H1 (cell line): ENCODE measurements at regions of chr20 and their contacts with region 1.

Region 1: GRCh38 chr20:62368976-62369814 is 2.1 kb upstream of the LAMA5 start:
- DNase-seq: peak in 1 of 2 experiments; percentile 74
- H3K4me3 ChIP-seq: peak overlapping the region; percentile 3 to 77 (median 43); a peak in 5 of 8 replicates
- H3K27ac ChIP-seq: no peak overlapping the region
- H3K4me1 ChIP-seq: peaks cover 10 to 51% (median 43%) of the 10 kb centered on the region in 4 experiments
- H3K27me3 ChIP-seq: no peaks in the 10 kb centered on the region
- CTCF ChIP-seq: peak; percentile 48 to 52 (median 48)
- EP300 ChIP-seq: no peak
- POLR2A ChIP-seq: peak in 1 of 2 experiments; percentile 30; a peak in 1 of 3 replicates
- RAD21 ChIP-seq: peak in 1 of 2 experiments; percentile 18; a peak in 1 of 4 replicates

Region 2: DNA sequence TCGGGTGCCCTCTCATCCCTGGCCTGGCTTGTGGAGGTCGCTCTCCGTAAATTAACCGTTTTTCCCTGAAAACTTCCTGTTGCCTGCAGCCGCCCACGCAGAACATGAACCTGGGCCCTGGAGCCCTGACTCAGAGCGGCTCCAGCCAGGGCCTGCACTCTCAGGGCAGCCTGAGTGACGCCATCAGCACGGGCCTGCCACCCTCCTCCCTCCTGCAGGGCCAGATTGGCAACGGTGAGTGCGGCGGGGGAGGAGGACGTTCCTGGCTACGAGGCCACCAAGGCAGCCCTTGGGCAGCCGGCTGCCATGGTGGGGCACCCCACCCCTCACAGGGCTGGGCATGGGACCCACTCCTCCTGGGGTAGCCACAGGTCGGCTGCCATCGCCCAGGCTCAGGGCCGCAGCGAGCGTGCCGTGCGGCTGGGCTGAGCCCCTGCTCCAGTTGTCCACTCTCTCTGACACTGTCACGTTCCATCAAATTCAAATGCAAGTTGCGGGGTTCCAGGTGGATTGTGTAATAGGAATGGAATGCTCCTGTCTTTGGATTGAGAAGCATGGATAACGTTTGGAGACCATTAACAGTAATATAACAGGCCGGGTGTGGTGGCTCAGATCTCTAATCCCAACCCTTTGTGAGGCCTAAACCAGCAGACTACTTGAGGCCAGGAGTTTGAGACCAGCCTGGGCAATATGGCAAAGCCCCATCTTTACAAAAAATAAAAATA is 207.7 kb before region 1 on chr20:
- CTCF ChIA-PET with region 1: no interaction called
- POLR2A ChIA-PET with region 1: no interaction called
- DNase-seq: no peak
- H3K4me3 ChIP-seq: no peak overlapping the region
- H3K27ac ChIP-seq: no peak overlapping the region
- H3K4me1 ChIP-seq: peaks cover 0 to 3% (median 2%) of the 10 kb centered on the region in 4 experiments; a peak in 5 of 7 replicates
- H3K27me3 ChIP-seq: no peaks in the 10 kb centered on the region
- CTCF ChIP-seq: no peak
- EP300 ChIP-seq: no peak
- POLR2A ChIP-seq: no peak
- RAD21 ChIP-seq: no peak

Region 3: DNA sequence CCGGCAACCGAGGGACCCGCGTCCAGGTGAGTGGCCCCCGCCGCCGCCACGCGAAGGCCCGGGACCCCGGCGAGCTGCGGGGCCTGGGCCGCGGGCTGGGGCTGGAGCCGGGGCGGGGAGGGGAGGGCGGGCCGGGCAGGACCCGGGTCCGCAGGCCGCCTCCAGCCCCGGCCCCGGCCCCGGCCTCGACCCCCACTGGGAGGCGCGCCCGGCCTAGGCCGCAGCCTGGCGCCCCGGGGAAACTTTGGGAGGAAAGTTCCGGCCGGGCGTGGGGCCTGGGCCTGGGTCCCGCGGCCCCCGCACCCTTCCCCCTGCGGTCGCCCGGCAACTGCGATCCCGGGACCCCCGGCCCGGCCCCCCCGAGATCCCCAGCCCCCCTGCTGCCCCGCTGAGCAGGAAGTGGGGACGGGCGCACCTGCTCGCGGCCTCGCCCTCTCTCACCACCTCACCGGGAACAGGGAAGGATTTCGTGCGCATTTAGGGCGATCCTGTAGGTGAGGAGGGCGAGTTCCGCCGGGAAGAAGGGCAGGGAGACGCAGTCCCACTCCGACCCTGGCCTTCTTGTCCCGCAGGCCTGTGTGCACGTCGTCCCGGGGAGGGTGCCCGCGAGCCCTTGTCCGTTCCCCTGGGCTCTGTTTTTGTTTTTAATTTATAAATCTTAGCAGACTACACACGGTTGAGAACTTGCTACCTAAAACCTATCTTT is 130.5 kb before region 1 on chr20:
- CTCF ChIA-PET with region 1: no interaction called
- POLR2A ChIA-PET with region 1: no interaction called
- DNase-seq: no peak
- H3K4me3 ChIP-seq: peak overlapping the region; percentile 72 to 90 (median 74)
- H3K27ac ChIP-seq: no peak overlapping the region
- H3K4me1 ChIP-seq: peaks cover 0 to 9% (median 6%) of the 10 kb centered on the region in 4 experiments; a peak in 5 of 7 replicates
- H3K27me3 ChIP-seq: 0 out of 7 replicates have a peak, but pooled peaks cover 0 to 3% (median 0%) of the 10 kb centered on the region in 4 experiments
- CTCF ChIP-seq: no peak
- EP300 ChIP-seq: no peak
- POLR2A ChIP-seq: no peak
- RAD21 ChIP-seq: no peak

Region 4: GRCh38 chr20:62302341-62303058 is 66.7 kb before region 1 on chr20 and contains the start of gene ADRM1:
- CTCF ChIA-PET with region 1: interaction called, 7 read pairs
- POLR2A ChIA-PET with region 1: interaction called, 170 read pairs
- DNase-seq: peak; percentile 89 to 98
- H3K4me3 ChIP-seq: peak within 1 kb of the TSS; percentile 62 to 96 (median 90)
- H3K27ac ChIP-seq: peak within 1 kb of the TSS; percentile 73; the same call in 1 of the 2 replicates
- H3K4me1 ChIP-seq: peaks cover 0 to 9% (median 4%) of the 10 kb centered on the region in 4 experiments; a peak in 5 of 7 replicates
- H3K27me3 ChIP-seq: no peaks in the 10 kb centered on the region
- CTCF ChIP-seq: peak; percentile 64 to 98 (median 75)
- EP300 ChIP-seq: peak; percentile 44 to 90; a peak in 2 of 3 replicates
- POLR2A ChIP-seq: peak in 1 of 2 experiments; percentile 76; a peak in 2 of 3 replicates
- RAD21 ChIP-seq: peak; percentile 47 to 56
- total RNA-seq, gene ADRM1: 126 and 138 TPM in 2 replicates

Region 5: GRCh38 chr20:62327726-62328495 is 41.3 kb before region 1 on chr20:
- CTCF ChIA-PET with region 1: interaction called, 9 read pairs
- POLR2A ChIA-PET with region 1: interaction called, 18 read pairs
- DNase-seq: no peak
- H3K4me3 ChIP-seq: no peak overlapping the region
- H3K27ac ChIP-seq: no peak overlapping the region
- H3K4me1 ChIP-seq: no peaks in the 10 kb centered on the region
- H3K27me3 ChIP-seq: no peaks in the 10 kb centered on the region
- CTCF ChIP-seq: peak in 1 of 3 experiments; percentile 13; a peak in 1 of 4 replicates
- EP300 ChIP-seq: no peak
- POLR2A ChIP-seq: no peak
- RAD21 ChIP-seq: peak in 1 of 2 experiments; percentile 20; a peak in 1 of 4 replicates

Region 6: GRCh38 chr20:62333820-62334595 is 35.2 kb before region 1 on chr20:
- CTCF ChIA-PET with region 1: interaction called, 13 read pairs
- POLR2A ChIA-PET with region 1: interaction called, 18 read pairs
- DNase-seq: no peak
- H3K4me3 ChIP-seq: no peak overlapping the region
- H3K27ac ChIP-seq: no peak overlapping the region
- H3K4me1 ChIP-seq: no peaks in the 10 kb centered on the region
- H3K27me3 ChIP-seq: no peaks in the 10 kb centered on the region
- CTCF ChIP-seq: no peak
- EP300 ChIP-seq: no peak
- POLR2A ChIP-seq: no peak
- RAD21 ChIP-seq: no peak

Region 7: DNA sequence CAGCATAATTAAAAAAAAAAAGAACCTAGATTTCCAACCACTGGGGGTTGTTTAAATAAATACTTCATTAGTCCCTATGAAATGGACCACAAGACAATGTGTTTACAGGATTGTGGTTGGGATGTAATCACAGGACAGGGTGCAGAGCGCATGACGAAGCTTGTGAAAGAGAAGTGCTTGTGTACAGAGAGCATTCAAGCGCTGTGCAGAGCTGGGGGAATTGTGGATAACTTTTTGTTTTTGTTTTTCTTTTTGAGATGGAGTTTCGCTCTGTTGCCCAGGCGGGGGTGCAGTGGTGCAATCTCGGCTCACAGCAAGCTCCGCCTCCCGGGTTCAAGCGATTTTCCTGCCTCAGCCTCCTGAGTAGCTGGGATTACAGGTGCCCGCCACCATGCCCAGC is 24.4 kb before region 1 on chr20:
- CTCF ChIA-PET with region 1: interaction called, 13 read pairs
- POLR2A ChIA-PET with region 1: interaction called, 114 read pairs
- DNase-seq: no peak
- H3K4me3 ChIP-seq: no peak overlapping the region
- H3K27ac ChIP-seq: no peak overlapping the region
- H3K4me1 ChIP-seq: no peaks in the 10 kb centered on the region
- H3K27me3 ChIP-seq: no peaks in the 10 kb centered on the region
- CTCF ChIP-seq: no peak
- EP300 ChIP-seq: no peak
- POLR2A ChIP-seq: no peak
- RAD21 ChIP-seq: no peak

Region 8: GRCh38 chr20:62357187-62357667 is 12.0 kb before region 1 on chr20:
- CTCF ChIA-PET with region 1: interaction called, 212 read pairs
- POLR2A ChIA-PET with region 1: interaction called, 213 read pairs
- DNase-seq: no peak
- H3K4me3 ChIP-seq: no peak overlapping the region
- H3K27ac ChIP-seq: no peak overlapping the region
- H3K4me1 ChIP-seq: peaks cover 3 to 59% (median 46%) of the 10 kb centered on the region in 4 experiments
- H3K27me3 ChIP-seq: no peaks in the 10 kb centered on the region
- CTCF ChIP-seq: no peak
- EP300 ChIP-seq: no peak
- POLR2A ChIP-seq: no peak
- RAD21 ChIP-seq: no peak

Region 9: GRCh38 chr20:62395311-62396242 is 26.4 kb after region 1 on chr20:
- CTCF ChIA-PET with region 1: interaction called, 3 read pairs
- POLR2A ChIA-PET with region 1: interaction called, 176 read pairs
- DNase-seq: no peak
- H3K4me3 ChIP-seq: no peak overlapping the region
- H3K27ac ChIP-seq: no peak overlapping the region
- H3K4me1 ChIP-seq: no peaks in the 10 kb centered on the region
- H3K27me3 ChIP-seq: no peaks in the 10 kb centered on the region
- CTCF ChIP-seq: peak in 2 of 3 experiments; percentile 27 to 45; a peak in 3 of 4 replicates
- EP300 ChIP-seq: no peak
- POLR2A ChIP-seq: no peak
- RAD21 ChIP-seq: peak in 1 of 2 experiments; percentile 14; a peak in 1 of 4 replicates

Region 10: GRCh38 chr20:62500237-62500864 is 131.2 kb after region 1 on chr20:
- CTCF ChIA-PET with region 1: no interaction called
- POLR2A ChIA-PET with region 1: no interaction called
- DNase-seq: peak in 1 of 2 experiments; percentile 93
- H3K4me3 ChIP-seq: no peak overlapping the region
- H3K27ac ChIP-seq: no peak overlapping the region
- H3K4me1 ChIP-seq: peaks cover 0 to 12% (median 3%) of the 10 kb centered on the region in 4 experiments; a peak in 4 of 7 replicates
- H3K27me3 ChIP-seq: peaks cover 0 to 5% (median 2%) of the 10 kb centered on the region in 4 experiments; a peak in 2 of 7 replicates
- CTCF ChIP-seq: peak; percentile 79 to 93 (median 89)
- EP300 ChIP-seq: no peak
- POLR2A ChIP-seq: no peak
- RAD21 ChIP-seq: peak; percentile 83 to 92